ENCODE measurements at regions of chr11 and their contacts with region 1.

Region 1: GRCh38 chr11:14358729-14359439 is at the start of gene RRAS2:
- DNase-seq: peak; percentile 81
- H3K4me3 Mint-ChIP-seq: peak within 1 kb of the TSS; percentile 99
- H3K27ac Mint-ChIP-seq: peak within 1 kb of the TSS; percentile 99
- H3K4me1 Mint-ChIP-seq: peaks cover 9% of the 10 kb centered on the region
- H3K27me3 Mint-ChIP-seq: no peaks in the 10 kb centered on the region
- CTCF ChIP-seq: no peak
- total RNA-seq, gene RRAS2: 37.2 and 42.8 TPM in 2 replicates

Region 2: DNA sequence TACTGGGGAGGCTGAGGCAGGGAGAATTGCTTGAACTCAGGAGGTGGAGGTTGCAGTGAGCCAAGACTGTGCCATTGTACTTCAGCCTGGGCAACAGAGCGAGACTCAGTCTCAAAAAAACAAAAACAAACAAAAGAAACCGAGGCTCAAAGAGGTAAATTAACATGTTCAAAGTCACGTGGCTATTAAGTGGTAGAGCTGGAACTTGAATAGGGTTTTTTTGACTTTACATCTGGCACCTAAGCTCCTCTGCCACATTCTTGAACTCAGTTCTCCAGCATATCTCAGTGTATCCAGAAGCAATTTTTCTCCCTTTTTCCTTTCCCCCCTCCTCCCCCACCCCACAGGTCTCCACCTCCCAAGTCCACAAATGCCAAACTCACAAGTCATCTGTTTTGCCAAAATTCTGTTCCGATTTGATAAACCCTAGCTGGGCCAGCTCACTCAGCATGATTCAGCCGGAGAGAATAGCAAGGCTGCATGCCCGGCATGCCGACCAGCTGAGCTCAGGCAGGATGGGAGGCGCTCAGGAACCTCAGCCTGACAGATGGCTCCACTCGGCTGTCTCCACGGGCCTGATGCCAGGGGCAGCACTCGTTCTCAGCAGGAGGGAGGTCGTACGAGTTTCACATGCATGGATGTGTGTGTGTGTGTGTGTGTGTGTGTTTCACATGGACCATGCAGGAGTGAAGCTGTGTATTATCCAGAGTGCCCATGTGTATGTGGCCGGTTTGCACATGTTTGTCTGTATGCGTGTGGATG is 63.3 kb after region 1 on chr11:
- CTCF ChIA-PET with region 1: no interaction called
- intact Hi-C with region 1: loop called (anchors 2 kb)
- DNase-seq: peak; percentile 62
- H3K4me3 Mint-ChIP-seq: no peak overlapping the region
- H3K27ac Mint-ChIP-seq: no peak overlapping the region
- H3K4me1 Mint-ChIP-seq: peaks cover 7% of the 10 kb centered on the region
- H3K27me3 Mint-ChIP-seq: no peaks in the 10 kb centered on the region
- CTCF ChIP-seq: no peak